ENCODE measurements at regions of chr2 and their contacts with region 1.

Region 1: GRCh38 chr2:27798948-27799645 is 27.6 kb downstream of the MRPL33 start:
- DNase-seq: peak in 2 of 3 donors; percentile 59 to 79
- H3K4me3 ChIP-seq: peak overlapping the region in 1 of 3 experiments; percentile 7
- H3K4me3 Mint-ChIP-seq: no peak overlapping the region
- H3K27ac ChIP-seq: no peak overlapping the region
- H3K27ac Mint-ChIP-seq: peak overlapping the region in 6 of 7 donors; percentile 20 to 82 (median 46)
- H3K4me1 ChIP-seq: peaks cover 72 to 90% of the 10 kb centered on the region in 2 donors
- H3K4me1 Mint-ChIP-seq: peaks cover 81% of the 10 kb centered on the region
- H3K27me3 ChIP-seq: no peaks in the 10 kb centered on the region
- H3K27me3 Mint-ChIP-seq: peaks cover 0 to 4% (median 0%) of the 10 kb centered on the region in 3 donors
- CTCF ChIP-seq: no peak

Region 2: DNA sequence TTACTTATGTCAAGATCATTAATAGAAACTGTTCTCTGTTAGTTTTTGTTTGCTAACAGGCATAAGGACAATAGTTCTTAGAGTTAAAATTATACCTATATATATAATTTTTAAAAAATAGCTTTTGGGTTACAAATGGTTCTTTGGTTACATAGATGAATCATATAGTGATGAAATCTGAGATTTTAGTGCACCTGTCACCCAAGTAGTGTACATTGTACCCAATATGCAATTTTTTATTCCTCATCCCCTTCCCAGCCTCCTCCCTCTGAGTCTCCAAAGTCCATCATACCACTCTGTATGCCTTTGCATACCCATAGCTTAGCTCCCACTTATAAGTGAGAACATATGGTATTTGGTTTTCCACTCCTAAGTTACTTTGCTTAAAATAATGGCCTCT is 109.0 kb before region 1 on chr2:
- intact Hi-C with region 1: no loop called
- DNase-seq: no peak
- H3K4me3 ChIP-seq: no peak overlapping the region
- H3K4me3 Mint-ChIP-seq: no peak overlapping the region
- H3K27ac ChIP-seq: no peak overlapping the region
- H3K27ac Mint-ChIP-seq: no peak overlapping the region
- H3K4me1 ChIP-seq: no peaks in the 10 kb centered on the region
- H3K4me1 Mint-ChIP-seq: no peaks in the 10 kb centered on the region
- H3K27me3 ChIP-seq: no peaks in the 10 kb centered on the region
- H3K27me3 Mint-ChIP-seq: no peaks in the 10 kb centered on the region
- CTCF ChIP-seq: no peak

Region 3: GRCh38 chr2:27737676-27738348 is 61.3 kb before region 1 on chr2:
- intact Hi-C with region 1: no loop called
- DNase-seq: peak in 2 of 3 donors; percentile 16 to 55
- H3K4me3 ChIP-seq: no peak overlapping the region
- H3K4me3 Mint-ChIP-seq: no peak overlapping the region
- H3K27ac ChIP-seq: no peak overlapping the region
- H3K27ac Mint-ChIP-seq: no peak overlapping the region
- H3K4me1 ChIP-seq: peaks cover 15 to 24% of the 10 kb centered on the region in 2 donors
- H3K4me1 Mint-ChIP-seq: peaks cover 21% of the 10 kb centered on the region
- H3K27me3 ChIP-seq: no peaks in the 10 kb centered on the region
- H3K27me3 Mint-ChIP-seq: peaks cover 4 to 11% (median 4%) of the 10 kb centered on the region in 3 donors
- CTCF ChIP-seq: no peak

Region 4: DNA sequence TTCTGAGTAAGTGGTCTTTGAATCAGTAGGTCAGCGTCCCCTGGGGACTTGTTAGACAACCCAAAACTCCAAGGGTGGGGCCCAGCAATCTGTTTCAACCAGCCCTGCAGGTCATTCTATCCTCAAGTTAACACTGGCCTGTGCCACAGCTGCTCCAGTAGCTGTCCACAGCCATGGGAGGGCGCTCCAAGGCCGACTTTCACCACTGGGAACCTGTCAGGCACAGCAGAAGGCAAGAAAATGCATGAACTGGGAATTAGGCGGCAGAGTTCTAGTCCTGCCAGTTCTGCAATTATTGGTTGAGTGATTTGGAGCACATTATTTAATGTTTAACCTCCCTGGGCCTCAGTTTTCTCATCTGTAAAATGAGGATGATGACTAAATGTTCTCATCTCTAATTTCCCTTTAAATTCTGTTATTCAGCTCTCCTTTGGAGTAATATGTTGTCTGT is 44.9 kb before region 1 on chr2:
- intact Hi-C with region 1: loop called in 1 of 2 experiments (anchors 5 kb)
- DNase-seq: peak; percentile 69 to 79 (median 74)
- H3K4me3 ChIP-seq: no peak overlapping the region
- H3K4me3 Mint-ChIP-seq: no peak overlapping the region
- H3K27ac ChIP-seq: peak overlapping the region in 1 of 2 donors; percentile 75
- H3K27ac Mint-ChIP-seq: peak overlapping the region in 6 of 7 donors; percentile 33 to 93 (median 72)
- H3K4me1 ChIP-seq: peaks cover 44 to 50% of the 10 kb centered on the region in 2 donors
- H3K4me1 Mint-ChIP-seq: peaks cover 47% of the 10 kb centered on the region
- H3K27me3 ChIP-seq: no peaks in the 10 kb centered on the region
- H3K27me3 Mint-ChIP-seq: no peaks in the 10 kb centered on the region
- CTCF ChIP-seq: peak; percentile 95

Region 5: GRCh38 chr2:28080911-28081310 is 281.8 kb after region 1 on chr2:
- intact Hi-C with region 1: loop called in 1 of 2 experiments (anchors 10 kb)
- DNase-seq: no peak
- H3K4me3 ChIP-seq: peak overlapping the region in 1 of 3 experiments; percentile 15
- H3K4me3 Mint-ChIP-seq: peak overlapping the region in 1 of 2 donors; percentile 60
- H3K27ac ChIP-seq: peak overlapping the region in 1 of 2 donors; percentile 47
- H3K27ac Mint-ChIP-seq: peak overlapping the region in 5 of 7 donors; percentile 16 to 74 (median 55)
- H3K4me1 ChIP-seq: peaks cover 29 to 52% of the 10 kb centered on the region in 2 donors
- H3K4me1 Mint-ChIP-seq: peaks cover 49% of the 10 kb centered on the region
- H3K27me3 ChIP-seq: no peaks in the 10 kb centered on the region
- H3K27me3 Mint-ChIP-seq: peaks cover 0 to 2% (median 0%) of the 10 kb centered on the region in 3 donors
- CTCF ChIP-seq: no peak